RWPE1 (cell line): ENCODE measurements at regions of chr19 and their contacts with region 1.

Region 1: DNA sequence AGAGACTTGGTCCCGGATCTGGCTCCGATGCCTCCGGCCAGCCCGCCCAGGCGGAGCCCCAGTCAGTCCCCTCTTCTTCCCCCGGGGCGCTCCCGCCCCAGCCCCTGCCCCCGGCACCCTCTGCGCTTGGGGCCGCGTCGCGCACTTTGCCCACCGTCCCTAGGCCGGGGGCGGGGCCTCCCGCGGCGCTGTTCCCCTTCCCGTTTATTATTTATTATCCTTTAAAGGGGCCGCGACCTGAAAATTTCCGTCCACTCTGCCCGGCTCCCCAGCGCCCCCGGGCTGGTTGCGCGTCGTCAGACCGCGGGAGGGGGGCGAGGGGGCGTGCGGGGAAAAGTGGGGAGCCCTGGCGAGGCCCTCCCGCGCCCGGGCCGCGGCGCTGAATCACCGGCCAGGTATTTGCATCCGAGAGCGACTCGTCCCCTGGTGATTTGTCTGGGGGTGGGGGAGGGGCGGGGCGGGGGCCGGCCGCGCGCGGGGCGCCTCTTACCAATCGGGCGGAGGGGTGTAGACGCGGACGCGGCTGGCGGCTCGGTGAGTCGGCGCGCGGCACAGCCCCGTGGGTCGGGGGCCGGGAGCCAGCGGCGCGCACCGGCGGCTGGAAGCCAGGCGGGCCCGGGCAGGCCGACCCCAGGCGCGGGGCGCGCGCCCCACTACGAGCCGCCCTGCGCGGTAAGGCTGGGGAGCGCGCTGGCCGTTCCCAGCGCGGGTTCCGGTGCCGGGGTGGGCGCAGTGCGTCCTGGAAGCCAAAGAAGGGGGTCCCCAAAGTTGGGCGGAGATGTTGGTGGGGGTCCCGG is at the start of gene ARID3A:
- DNase-seq: peak; percentile 86
- H3K27ac ChIP-seq: peak within 1 kb of the TSS; percentile 85
- CTCF ChIP-seq: no peak

Region 2: DNA sequence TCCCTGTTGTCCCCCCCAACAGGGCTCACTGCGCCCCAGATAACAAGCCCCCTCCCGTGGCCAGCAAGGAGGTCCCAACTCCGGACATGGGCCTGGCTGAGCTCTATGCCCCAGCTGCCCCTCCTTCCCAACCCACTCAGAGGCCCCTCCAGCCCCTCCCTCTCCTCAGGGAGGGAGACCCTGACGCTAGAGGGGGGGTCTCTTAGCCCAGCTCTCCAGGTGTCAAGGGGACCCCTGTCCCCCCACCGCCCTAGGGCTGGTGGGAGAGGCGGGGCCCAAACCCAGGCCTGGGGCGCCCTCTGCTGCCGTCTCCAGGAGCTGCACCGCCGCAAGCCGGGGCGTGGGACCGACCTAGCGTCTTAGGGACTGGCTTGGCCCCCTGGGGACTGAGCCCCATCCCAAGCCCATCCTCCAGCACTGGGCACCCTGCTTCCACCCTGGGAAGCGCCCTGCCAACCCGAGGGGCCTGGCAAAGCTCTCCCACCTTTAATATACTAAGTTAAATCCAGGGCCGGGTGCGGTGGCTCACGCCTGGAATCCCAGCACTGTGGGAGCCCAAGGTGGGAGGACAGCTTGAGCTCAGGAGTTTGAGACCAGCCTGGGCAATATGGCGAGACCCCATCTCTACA is 75.9 kb after region 1 on chr19:
- CTCF ChIA-PET with region 1: interaction called, 3 read pairs
- POLR2A ChIA-PET with region 1: interaction called, 10 read pairs
- DNase-seq: peak; percentile 48
- H3K27ac ChIP-seq: no peak overlapping the region
- CTCF ChIP-seq: peak; percentile 93

Region 3: DNA sequence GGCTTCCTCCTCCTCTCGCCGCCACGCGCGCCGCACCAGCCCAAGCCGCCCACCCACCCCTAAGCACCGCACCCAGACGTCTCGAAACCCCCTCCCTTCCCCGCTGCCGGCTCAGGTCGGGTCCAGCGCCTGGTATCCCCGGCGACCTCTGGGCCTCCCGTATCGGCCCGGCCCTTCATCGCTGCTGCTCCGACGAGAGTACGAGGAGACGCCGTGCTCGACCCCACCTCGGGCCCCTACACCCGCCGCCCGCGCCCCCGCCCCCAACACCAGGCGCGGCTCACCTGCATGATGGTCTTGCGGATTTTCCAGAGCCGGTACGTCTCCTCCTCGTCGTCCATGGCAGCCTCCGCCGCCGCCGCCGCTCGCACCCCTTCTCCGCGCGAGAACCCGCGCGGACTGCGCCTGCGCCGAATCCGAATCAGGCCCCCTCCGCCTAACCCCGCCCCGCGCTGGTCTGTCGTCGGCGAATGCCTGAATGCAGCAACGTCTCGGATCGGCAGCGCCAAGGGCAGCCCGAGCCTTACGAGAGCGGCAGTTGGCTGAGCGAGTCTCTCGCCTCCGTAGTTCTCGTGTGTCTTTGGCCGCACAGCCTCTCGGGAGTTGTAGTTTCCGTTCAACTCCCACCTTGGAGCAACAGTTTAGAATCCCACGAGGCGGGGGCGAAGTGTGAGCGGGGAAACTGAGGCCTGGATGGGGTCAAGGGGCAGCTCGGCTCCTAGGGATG is 169.4 kb after region 1 on chr19 and contains the start of gene POLR2E:
- CTCF ChIA-PET with region 1: no interaction called
- POLR2A ChIA-PET with region 1: no interaction called
- DNase-seq: peak; percentile 92
- H3K27ac ChIP-seq: peak within 1 kb of the TSS; percentile 79
- CTCF ChIP-seq: no peak